Pancreas (tissue), 10 donors: ENCODE measurements at regions of chr7 and their contacts with region 1.

Region 1: GRCh38 chr7:141014524-141015395 is at the start of gene MRPS33:
- DNase-seq: peak; percentile 90 to 98 (median 94)
- ATAC-seq: peak; percentile 99 to 100 (median 99)
- H3K4me3 ChIP-seq: peak within 1 kb of the TSS; percentile 38 to 56 (median 51)
- H3K27ac ChIP-seq: peak within 1 kb of the TSS; percentile 55 to 89 (median 77)
- H3K4me1 ChIP-seq: peaks cover 0 to 12% (median 3%) of the 10 kb centered on the region in 3 donors
- H3K27me3 ChIP-seq: peaks cover 0 to 4% (median 0%) of the 10 kb centered on the region in 4 donors
- CTCF ChIP-seq: peak in 1 of 4 donors; percentile 12
- total RNA-seq, gene MRPS33: 19.6 to 36.5 (median 28.3) TPM

Region 2: DNA sequence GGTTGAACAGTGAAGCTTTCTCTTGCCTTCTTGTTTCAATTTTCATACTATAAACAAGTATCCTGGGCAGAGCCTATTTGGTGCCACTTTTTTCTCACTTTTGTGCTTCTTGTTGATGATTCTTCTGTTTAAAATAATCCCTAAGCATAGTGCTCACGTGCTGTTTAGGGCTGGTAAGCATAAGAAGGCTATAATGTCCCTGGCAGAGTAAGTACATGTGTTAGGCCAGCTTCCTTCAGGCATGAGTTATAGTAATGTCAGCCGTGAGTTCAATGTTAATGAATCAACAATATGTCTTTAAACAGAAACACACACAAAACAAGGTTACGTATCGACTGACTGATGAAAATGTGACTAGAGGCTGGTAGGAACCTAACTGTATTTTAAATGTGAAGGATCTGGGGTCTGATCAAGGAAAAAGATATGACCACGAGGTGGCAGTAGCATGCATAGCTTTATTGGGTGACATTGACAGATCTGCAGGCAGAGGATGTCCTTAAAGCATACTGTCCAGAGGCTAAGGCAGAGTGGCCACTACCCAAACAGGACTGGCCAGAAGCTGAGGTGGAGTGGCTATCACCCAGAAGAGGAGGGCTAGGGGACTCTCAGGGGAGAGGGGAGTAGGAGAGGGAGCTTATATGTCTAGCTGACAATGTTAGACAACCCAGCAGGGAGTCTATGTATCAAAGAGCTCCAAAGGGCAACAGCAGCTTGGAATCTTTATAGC is 203.8 kb before region 1 on chr7:
- intact Hi-C with region 1: loop called in 2 of 3 experiments (anchors 5 kb)
- DNase-seq: peak in 3 of 6 donors; percentile 35 to 63 (median 43)
- ATAC-seq: peak; percentile 80 to 96 (median 94)
- H3K4me3 ChIP-seq: no peak overlapping the region
- H3K27ac ChIP-seq: no peak overlapping the region
- H3K4me1 ChIP-seq: no peaks in the 10 kb centered on the region
- H3K27me3 ChIP-seq: no peaks in the 10 kb centered on the region
- CTCF ChIP-seq: peak; percentile 27 to 64 (median 54)

Region 3: GRCh38 chr7:141198184-141198958 is 183.6 kb after region 1 on chr7:
- intact Hi-C with region 1: no loop called
- DNase-seq: no peak
- ATAC-seq: no peak
- H3K4me3 ChIP-seq: no peak overlapping the region
- H3K27ac ChIP-seq: no peak overlapping the region
- H3K4me1 ChIP-seq: no peaks in the 10 kb centered on the region
- H3K27me3 ChIP-seq: no peaks in the 10 kb centered on the region
- CTCF ChIP-seq: no peak

Region 4: DNA sequence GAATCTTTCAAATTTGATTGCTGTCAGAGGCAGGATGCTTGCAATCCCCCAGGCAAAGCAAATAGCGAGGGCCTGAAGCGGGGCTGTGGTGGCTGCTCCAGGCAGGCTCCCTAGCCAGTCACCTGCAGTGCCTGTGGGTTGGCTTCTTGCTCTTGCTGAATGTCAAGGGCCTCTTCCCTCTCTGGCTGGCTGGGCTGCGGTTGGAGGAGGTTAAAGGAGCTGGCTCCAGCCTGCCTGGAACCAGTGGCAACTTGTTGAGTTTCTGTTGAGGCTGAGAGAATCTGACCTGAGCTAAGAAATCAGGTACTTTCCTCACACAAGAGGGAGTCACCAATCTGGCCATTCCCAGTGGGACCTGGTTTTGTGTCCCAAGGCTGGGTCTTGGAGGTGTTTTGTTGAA is 193.8 kb after region 1 on chr7:
- intact Hi-C with region 1: no loop called
- DNase-seq: no peak
- ATAC-seq: peak in 2 of 4 donors; percentile 43 to 47
- H3K4me3 ChIP-seq: no peak overlapping the region
- H3K27ac ChIP-seq: no peak overlapping the region
- H3K4me1 ChIP-seq: no peaks in the 10 kb centered on the region
- H3K27me3 ChIP-seq: no peaks in the 10 kb centered on the region
- CTCF ChIP-seq: no peak